ENCODE measurements at regions of chr12 and their contacts with region 1.

Region 1: DNA sequence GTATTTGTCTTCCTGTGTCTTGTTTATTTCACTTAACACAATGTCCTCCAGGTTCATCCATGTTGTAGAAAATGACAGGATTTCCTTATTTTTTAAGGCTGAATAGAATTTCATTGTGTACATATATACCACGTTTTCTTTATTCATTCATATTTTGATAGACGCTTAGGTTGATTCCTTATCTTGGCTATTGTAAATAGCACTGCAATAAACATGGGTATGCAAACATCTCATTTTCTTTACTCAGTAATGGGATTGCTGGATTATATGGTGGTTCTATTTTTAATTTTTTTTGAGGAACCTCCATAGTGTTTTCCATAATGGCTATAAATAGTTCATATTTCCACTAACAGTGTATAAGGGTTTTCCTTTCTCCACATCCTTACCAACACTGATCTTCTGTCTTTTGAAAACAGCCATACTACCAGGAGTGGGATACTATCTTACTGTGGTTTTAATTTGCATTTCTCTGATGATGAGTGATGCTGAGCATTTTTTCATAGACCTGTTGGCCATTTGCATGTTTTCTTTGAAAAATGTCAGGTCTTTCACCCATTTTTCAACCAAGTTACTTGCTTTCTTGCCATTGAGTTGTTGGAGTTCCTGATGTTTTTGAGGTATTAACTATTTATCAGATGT is 32.8 kb downstream of the DUSP16 start:
- DNase-seq: no peak
- H3K4me3 Mint-ChIP-seq: no peak overlapping the region
- H3K27ac Mint-ChIP-seq: peak overlapping the region; percentile 31
- H3K4me1 Mint-ChIP-seq: peaks cover 58% of the 10 kb centered on the region
- H3K27me3 Mint-ChIP-seq: no peaks in the 10 kb centered on the region

Region 2: DNA sequence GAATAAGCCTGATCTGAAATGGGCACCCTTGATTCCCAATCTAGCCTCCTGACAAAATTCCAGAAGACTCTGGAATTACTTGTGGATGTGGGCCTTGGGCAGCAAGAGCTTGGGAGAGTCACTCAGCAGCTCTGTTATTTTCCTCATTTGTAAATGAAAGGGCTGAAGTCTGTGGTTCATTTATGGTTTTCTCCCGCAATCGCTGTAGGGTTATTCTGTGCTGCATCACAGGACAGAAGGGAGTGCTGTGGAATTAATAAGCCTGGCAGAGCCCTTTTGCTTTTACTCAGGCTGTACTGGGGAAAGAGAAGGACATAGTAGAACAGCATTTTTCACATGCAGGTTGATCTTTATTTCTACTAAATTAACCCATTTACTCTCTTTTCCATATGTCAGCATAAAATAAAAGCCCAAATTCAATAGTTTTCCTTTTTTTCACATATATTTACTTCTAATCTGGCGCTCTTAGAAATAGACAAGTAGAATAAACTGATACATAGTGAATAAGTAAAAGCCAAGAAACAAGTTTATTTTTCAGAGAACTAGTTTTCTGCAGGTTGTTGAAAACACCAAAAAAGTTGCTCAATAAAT is 16.4 kb before region 1 on chr12:
- CTCF ChIA-PET with region 1: interaction called, 3 read pairs
- POLR2A ChIA-PET with region 1: interaction called, 7 read pairs
- intact Hi-C with region 1: loop called (anchors 2 kb)
- DNase-seq: no peak
- H3K4me3 Mint-ChIP-seq: no peak overlapping the region
- H3K27ac Mint-ChIP-seq: no peak overlapping the region
- H3K4me1 Mint-ChIP-seq: peaks cover 26% of the 10 kb centered on the region
- H3K27me3 Mint-ChIP-seq: no peaks in the 10 kb centered on the region

Region 3: GRCh38 chr12:12999959-13000615 is 470.2 kb after region 1 on chr12 and contains the start of gene HEBP1:
- CTCF ChIA-PET with region 1: no interaction called
- POLR2A ChIA-PET with region 1: no interaction called
- intact Hi-C with region 1: no loop called
- DNase-seq: peak; percentile 97
- H3K4me3 Mint-ChIP-seq: peak within 1 kb of the TSS; percentile 82
- H3K27ac Mint-ChIP-seq: peak within 1 kb of the TSS; percentile 53
- H3K4me1 Mint-ChIP-seq: peaks cover 25% of the 10 kb centered on the region
- H3K27me3 Mint-ChIP-seq: peaks cover 6% of the 10 kb centered on the region
- total RNA-seq, gene HEBP1: 20.5 to 22.4 TPM

Measured in activated CD4-positive, alpha-beta memory T cell treated with anti-CD3 and anti-CD28 coated beads for 36 hours (primary cell).